CD8-positive, alpha-beta T cell (primary cell): ENCODE measurements at regions of chr7 and their contacts with region 1.

Region 1: DNA sequence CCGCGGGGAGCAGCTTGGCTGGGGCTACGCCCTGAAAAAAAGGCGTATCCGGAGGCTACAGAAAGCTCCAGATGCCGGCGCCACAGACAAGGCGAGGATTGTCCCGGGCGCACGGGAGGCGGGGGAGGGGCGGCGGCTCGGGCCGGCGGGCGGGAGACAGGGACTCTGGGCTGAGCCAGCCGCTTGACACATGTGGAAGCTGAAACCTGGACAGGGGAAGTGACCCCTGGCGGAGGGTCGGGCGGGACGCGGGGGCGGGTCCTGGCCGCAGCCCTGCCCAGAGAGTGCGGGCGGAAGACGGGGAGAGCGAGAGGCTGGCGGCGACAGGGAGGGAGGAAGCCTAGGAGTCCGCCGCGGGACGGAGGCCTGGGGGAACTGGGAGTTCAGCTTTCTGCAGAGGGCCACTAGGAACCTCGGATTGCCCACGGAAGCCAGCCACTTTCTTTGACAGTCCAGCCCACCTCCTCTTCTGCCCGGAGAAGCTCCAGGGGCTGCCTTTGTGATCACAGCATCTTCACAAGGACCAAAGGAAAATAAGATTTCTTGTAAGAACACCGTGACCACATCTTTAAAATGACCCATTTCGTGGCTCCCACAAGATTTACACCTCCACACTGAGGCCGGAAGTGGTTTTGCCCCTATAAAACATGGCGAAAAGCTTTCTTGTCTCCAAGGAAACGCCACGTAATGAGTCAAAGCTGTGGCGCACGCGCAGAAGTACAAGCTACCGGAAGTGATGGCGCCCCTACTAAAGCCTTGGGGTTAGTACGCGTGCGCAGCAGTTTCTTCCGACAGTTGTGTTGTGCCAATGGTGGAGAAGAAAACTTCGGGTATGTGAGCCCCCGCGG is at the starts of genes PLOD3 and ZNHIT1:
- DNase-seq: peak; percentile 89 to 99 (median 96)
- ATAC-seq: peak; percentile 75
- H3K4me3 ChIP-seq: peak within 1 kb of the TSS; percentile 82 to 91
- H3K4me3 Mint-ChIP-seq: peak within 1 kb of the TSS; percentile 94
- H3K27ac ChIP-seq: peak within 1 kb of the TSS; percentile 71 to 84
- H3K27ac Mint-ChIP-seq: peak within 1 kb of the TSS; percentile 91
- H3K4me1 ChIP-seq: peaks cover 29% of the 10 kb centered on the region
- H3K4me1 Mint-ChIP-seq: peaks cover 33% of the 10 kb centered on the region
- H3K27me3 ChIP-seq: no peaks in the 10 kb centered on the region
- H3K27me3 Mint-ChIP-seq: no peaks in the 10 kb centered on the region
- CTCF ChIP-seq: no peak
- total RNA-seq, gene PLOD3: 6.6 to 7.5 TPM
- total RNA-seq, gene ZNHIT1: 23.7 to 24.6 TPM

Region 2: DNA sequence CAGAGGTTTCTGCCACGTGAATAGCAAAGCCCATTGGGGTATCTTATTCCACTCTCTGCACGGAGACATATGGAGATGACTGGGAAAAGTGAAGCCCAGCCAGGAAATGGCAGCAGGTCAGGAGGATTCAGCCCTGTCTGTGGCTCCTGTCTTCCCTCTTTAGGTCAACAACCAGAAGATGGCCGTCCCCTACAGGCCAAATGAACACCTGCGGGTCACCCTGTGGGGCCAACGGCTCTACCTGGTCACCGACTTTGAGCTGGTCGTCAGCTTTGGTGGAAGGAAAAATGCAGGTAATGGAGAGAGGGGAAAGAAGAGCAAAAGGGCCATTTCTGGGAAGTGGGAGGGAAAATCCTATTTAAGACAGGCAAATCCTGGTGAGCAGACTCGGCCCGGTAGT is 428.6 kb before region 1 on chr7:
- CTCF ChIA-PET with region 1: no interaction called
- POLR2A ChIA-PET with region 1: no interaction called
- intact Hi-C with region 1: no loop called
- DNase-seq: no peak
- ATAC-seq: no peak
- H3K4me3 ChIP-seq: no peak overlapping the region
- H3K4me3 Mint-ChIP-seq: no peak overlapping the region
- H3K27ac ChIP-seq: no peak overlapping the region
- H3K27ac Mint-ChIP-seq: no peak overlapping the region
- H3K4me1 ChIP-seq: peaks cover 5% of the 10 kb centered on the region
- H3K4me1 Mint-ChIP-seq: peaks cover 3% of the 10 kb centered on the region
- H3K27me3 ChIP-seq: peaks cover 0 to 2% of the 10 kb centered on the region in 2 experiments
- H3K27me3 Mint-ChIP-seq: peaks cover 17% of the 10 kb centered on the region
- CTCF ChIP-seq: no peak

Region 3: GRCh38 chr7:101085162-101085987 is 132.2 kb before region 1 on chr7 and contains the start of gene TRIM56:
- CTCF ChIA-PET with region 1: no interaction called
- POLR2A ChIA-PET with region 1: interaction called, 4 read pairs
- intact Hi-C with region 1: loop called in 1 of 2 experiments (anchors 10 kb)
- DNase-seq: peak; percentile 43 to 89 (median 76)
- ATAC-seq: peak; percentile 91
- H3K4me3 ChIP-seq: peak within 1 kb of the TSS; percentile 81 to 95
- H3K4me3 Mint-ChIP-seq: peak within 1 kb of the TSS; percentile 98
- H3K27ac ChIP-seq: peak within 1 kb of the TSS; percentile 91 to 94
- H3K27ac Mint-ChIP-seq: peak within 1 kb of the TSS; percentile 98
- H3K4me1 ChIP-seq: peaks cover 30% of the 10 kb centered on the region
- H3K4me1 Mint-ChIP-seq: peaks cover 27% of the 10 kb centered on the region
- H3K27me3 ChIP-seq: no peaks in the 10 kb centered on the region
- H3K27me3 Mint-ChIP-seq: no peaks in the 10 kb centered on the region
- CTCF ChIP-seq: no peak
- total RNA-seq, gene TRIM56: 24.0 to 26.0 TPM